ENCODE measurements at regions of chr10 and their contacts with region 1.

Region 1: GRCh38 chr10:84328418-84329195 is at the start of gene CCSER2:
- DNase-seq: peak; percentile 98
- H3K4me3 Mint-ChIP-seq: peak within 1 kb of the TSS; percentile 95
- H3K27ac Mint-ChIP-seq: peak within 1 kb of the TSS; percentile 94
- H3K4me1 Mint-ChIP-seq: peaks cover 35% of the 10 kb centered on the region
- H3K27me3 Mint-ChIP-seq: peaks cover 5% of the 10 kb centered on the region
- total RNA-seq, gene CCSER2: 42.9 and 45.6 TPM in 2 replicates

Region 2: GRCh38 chr10:84139126-84140035 is 189.2 kb before region 1 on chr10 and contains the start of gene GHITM:
- intact Hi-C with region 1: loop called (anchors 1 kb)
- DNase-seq: peak; percentile 100
- H3K4me3 Mint-ChIP-seq: peak within 1 kb of the TSS; percentile 97
- H3K27ac Mint-ChIP-seq: peak within 1 kb of the TSS; percentile 97
- H3K4me1 Mint-ChIP-seq: peaks cover 25% of the 10 kb centered on the region
- H3K27me3 Mint-ChIP-seq: peaks cover 7% of the 10 kb centered on the region
- total RNA-seq, gene GHITM: 145 and 148 TPM in 2 replicates

Region 3: DNA sequence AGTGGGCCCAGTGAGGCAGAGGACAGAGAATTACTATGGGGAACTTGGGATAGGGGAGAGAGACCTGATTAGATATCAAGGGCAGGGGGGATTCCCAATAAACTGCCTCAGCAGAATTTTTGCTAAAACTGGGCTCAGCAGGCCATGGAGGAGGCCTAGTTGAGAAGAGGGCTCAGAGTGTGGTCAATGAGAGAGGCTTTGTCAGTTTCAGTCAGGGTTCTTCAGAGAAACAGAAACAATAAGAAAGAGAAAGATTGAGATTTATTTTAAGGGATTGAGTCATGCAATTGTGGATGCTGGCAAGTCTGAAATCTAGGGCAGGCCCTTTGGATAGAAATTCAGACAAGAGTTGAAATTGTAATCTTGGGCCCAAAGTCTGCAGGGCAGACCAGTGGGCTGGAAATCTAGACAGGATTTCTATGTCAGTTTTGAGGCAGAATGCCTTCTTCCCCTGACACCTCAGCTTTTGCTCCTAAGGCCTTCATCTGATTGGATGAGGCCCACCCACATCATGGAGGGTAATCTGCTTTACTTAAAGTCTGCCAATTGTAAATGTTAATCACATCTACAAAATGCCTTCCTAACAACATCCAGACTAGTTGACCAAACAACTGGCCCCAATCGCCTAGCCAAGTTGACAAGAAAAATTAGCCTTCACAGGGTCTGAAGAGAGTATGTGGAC is 33.7 kb before region 1 on chr10:
- intact Hi-C with region 1: loop called (anchors 1 kb)
- DNase-seq: peak; percentile 63
- H3K4me3 Mint-ChIP-seq: no peak overlapping the region
- H3K27ac Mint-ChIP-seq: no peak overlapping the region
- H3K4me1 Mint-ChIP-seq: peaks cover 26% of the 10 kb centered on the region
- H3K27me3 Mint-ChIP-seq: peaks cover 17% of the 10 kb centered on the region

Region 4: DNA sequence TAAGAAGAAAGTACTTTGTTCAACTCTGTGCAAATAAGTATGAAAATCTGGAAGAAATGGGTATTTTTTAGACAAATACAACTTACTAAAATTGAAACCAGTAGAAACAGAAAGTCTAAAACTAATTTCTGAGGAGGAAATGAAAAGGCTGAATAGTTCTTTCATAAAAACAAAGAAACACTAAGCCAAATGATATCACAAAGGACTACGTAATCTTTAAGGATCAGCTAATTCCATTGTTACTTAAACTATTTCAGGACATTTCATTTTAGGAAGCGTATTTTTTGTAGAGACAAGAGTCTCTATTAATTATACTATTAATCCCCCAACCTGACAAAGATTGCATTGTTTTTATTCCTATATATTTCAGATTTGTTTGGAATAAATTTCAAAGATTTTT is 11.4 kb before region 1 on chr10:
- intact Hi-C with region 1: loop called (anchors 1 kb)
- DNase-seq: no peak
- H3K4me3 Mint-ChIP-seq: no peak overlapping the region
- H3K27ac Mint-ChIP-seq: no peak overlapping the region
- H3K4me1 Mint-ChIP-seq: peaks cover 17% of the 10 kb centered on the region
- H3K27me3 Mint-ChIP-seq: peaks cover 27% of the 10 kb centered on the region

Region 5: DNA sequence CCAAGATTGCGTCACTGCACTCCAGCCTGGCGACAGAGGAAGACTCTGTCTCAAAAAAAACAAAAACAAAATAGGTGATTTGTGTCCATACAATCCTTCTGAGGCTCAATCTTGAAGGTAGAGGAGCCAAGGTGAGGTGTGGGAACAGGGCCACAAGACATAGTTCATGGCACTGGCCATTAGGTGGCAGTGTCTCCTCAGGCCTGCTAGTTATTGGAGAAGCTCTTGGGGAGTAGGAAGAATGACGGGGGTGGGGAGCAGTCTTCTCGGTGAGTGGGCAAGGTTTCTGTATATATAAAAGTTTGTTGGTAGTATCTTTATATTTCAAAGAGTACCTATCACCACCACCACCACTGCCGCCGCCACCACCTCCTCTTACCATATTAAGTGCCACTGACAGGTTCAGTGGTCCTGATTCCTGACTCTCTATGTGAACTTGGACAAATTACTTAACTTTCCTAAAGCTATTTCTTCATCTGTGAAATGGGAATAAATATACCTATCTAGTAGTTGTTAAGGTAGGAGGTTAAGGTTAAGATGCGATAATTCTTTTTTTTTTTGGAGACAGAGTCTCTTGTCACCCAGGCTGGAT is 23.7 kb after region 1 on chr10:
- intact Hi-C with region 1: loop called (anchors 2 kb)
- DNase-seq: peak; percentile 88
- H3K4me3 Mint-ChIP-seq: no peak overlapping the region
- H3K27ac Mint-ChIP-seq: no peak overlapping the region
- H3K4me1 Mint-ChIP-seq: peaks cover 37% of the 10 kb centered on the region
- H3K27me3 Mint-ChIP-seq: no peaks in the 10 kb centered on the region

Region 6: GRCh38 chr10:84407396-84408180 is 79.0 kb after region 1 on chr10:
- intact Hi-C with region 1: no loop called
- DNase-seq: no peak
- H3K4me3 Mint-ChIP-seq: no peak overlapping the region
- H3K27ac Mint-ChIP-seq: no peak overlapping the region
- H3K4me1 Mint-ChIP-seq: peaks cover 12% of the 10 kb centered on the region
- H3K27me3 Mint-ChIP-seq: no peaks in the 10 kb centered on the region